Activated T-helper 1 cell treated with anti-CD3 and anti-CD28 coated beads, Interleukin-12 subunit alpha, Interleukin-12 subunit beta, Interleukin-2, Interleukin-4 antibody, amounts not matched to agents 30 ng/mL and 10 ng/mL and 1 ng/mL, durations not matched to agents 14 hours and 24 hours and 36 hours (primary cell): ENCODE measurements at regions of chr10 and their contacts with region 1.

Region 1: GRCh38 chr10:100518761-100519241 is 860 bp downstream of the SEC31B start:
- DNase-seq: peak; percentile 49
- H3K4me3 Mint-ChIP-seq: no peak overlapping the region
- H3K27ac Mint-ChIP-seq: no peak overlapping the region
- H3K4me1 Mint-ChIP-seq: peaks cover 28% of the 10 kb centered on the region
- H3K27me3 Mint-ChIP-seq: no peaks in the 10 kb centered on the region

Region 2: DNA sequence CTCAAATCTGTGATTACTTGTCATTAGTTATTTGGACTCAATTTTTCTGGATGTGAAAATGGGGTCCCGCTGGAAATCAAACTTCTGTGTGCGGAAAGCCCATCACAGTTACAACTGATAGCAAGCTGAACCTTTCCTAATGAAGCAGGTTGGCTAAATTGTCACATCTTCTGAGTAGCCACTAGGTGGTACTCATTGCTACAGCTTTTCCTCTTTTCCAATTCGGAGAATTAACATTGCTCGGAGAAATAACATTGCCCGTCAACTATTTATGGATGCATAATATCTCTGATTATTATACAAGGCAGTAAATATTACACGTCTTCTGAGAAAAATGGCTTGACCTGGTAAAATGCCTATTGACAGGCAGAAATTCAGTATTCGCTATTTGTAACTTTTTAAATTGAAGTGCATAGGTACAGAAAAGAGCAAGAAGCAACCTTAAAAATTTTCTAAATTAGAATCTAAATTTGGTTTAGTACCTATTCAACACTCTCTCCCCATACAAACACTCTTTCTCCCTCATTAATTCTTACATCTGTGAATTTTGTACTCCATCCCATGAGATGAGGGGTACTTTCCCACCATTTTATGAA is 215.0 kb before region 1 on chr10:
- intact Hi-C with region 1: loop called (anchors 1 kb)
- DNase-seq: no peak
- H3K4me3 Mint-ChIP-seq: no peak overlapping the region
- H3K27ac Mint-ChIP-seq: no peak overlapping the region
- H3K4me1 Mint-ChIP-seq: no peaks in the 10 kb centered on the region
- H3K27me3 Mint-ChIP-seq: peaks cover 40% of the 10 kb centered on the region

Region 3: DNA sequence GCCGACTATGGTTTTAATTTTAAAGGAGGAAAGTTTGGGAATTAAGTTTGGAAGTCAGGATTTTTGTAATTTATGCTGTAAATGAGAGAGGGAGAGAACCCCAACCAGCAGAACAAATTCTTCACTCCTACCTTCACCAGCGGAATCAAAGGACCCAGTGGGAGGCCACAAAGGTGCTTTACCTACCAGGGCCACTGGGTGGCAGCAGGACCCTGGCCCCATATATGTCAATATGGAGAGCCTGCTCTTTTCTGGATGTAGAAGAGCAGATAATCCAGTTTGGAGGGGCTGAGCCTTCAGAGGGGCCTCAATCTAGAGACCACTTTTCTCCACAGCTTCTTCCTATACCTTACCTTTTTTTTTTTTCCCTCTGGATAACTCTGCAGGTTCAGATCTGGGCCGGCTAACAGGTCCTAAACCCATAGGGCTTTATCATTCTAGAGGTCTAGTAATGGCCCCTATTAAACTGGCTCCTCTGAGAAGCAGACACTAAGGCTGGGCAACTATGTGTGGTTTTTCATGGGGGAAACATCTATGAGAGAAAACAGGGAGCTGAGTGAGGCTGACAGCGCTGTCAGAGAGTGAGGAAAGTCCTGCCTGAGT is 180.3 kb before region 1 on chr10:
- intact Hi-C with region 1: loop called (anchors 1 kb)
- DNase-seq: peak; percentile 67
- H3K4me3 Mint-ChIP-seq: no peak overlapping the region
- H3K27ac Mint-ChIP-seq: no peak overlapping the region
- H3K4me1 Mint-ChIP-seq: peaks cover 35% of the 10 kb centered on the region
- H3K27me3 Mint-ChIP-seq: peaks cover 17% of the 10 kb centered on the region

Region 4: DNA sequence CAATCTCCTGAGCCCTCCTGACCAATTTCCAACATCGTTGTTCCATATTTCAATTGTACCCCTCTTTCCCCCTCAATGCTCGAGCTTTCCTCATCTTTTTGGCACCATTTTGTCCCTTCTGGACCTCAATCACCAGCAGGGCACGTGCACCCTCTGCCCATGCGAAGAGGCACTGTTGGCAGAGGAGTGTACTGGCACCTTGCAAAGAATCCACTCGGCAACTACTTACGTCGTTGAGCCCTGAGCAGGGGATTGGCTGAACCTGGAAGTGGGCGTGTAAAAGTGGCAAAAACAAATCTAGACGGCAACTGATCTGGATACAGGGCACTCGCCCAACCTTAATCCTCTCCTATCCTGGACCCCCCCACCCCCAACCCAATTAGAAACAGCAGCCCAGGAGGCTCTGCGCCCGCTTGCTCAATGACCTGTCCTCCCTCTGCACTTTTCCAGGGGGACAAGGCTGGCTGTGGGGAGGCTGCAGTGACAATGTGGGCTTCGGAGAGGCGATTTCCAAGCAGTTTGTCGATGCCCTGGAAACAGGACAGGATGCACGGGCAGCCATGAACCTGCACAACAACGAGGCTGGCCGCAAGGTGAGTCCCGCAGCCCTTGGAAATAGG is 37.2 kb before region 1 on chr10:
- intact Hi-C with region 1: loop called (anchors 1 kb)
- DNase-seq: peak; percentile 85
- H3K4me3 Mint-ChIP-seq: peak overlapping the region; percentile 79
- H3K27ac Mint-ChIP-seq: peak overlapping the region; percentile 42
- H3K4me1 Mint-ChIP-seq: peaks cover 41% of the 10 kb centered on the region
- H3K27me3 Mint-ChIP-seq: no peaks in the 10 kb centered on the region